Ascending aorta (tissue), 2 donors: ENCODE measurements at regions of chr17 and their contacts with region 1.

Region 1: DNA sequence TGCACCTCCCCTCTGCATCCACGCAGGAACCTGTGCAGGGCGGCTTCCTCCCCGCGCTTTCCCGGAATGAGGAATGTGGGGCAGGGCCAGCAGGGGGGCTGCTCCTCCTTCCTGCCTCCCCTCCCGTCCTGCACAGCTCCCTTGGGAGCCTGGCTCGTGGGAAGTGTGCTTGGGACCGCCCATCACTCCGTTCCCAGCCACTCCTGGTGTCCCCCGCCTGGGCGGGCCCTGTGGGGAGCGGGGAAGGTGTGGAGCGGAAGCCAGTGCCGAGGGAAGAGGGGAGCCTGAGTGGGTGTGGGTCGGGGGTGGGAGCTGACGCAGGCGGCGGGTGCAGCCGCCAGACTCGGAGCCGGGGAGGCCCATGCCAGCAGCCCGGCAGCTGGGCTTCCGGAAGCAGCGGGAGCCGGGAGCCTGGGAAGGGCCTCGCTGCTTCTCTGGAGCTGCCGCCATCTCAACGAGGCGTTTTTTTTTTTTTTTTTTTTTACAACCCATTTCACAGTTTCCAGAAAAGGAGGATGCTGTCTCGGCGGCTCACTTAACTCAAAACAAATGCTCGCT is 24.1 kb downstream of the BAHCC1 start:
- DNase-seq: peak; percentile 73 to 98
- H3K4me3 ChIP-seq: peak overlapping the region; percentile 46 to 56
- H3K27ac ChIP-seq: peak overlapping the region; percentile 91 to 100
- H3K4me1 ChIP-seq: peaks cover 61 to 68% of the 10 kb centered on the region in 2 donors
- H3K27me3 ChIP-seq: no peaks in the 10 kb centered on the region
- CTCF ChIP-seq: no peak

Region 2: GRCh38 chr17:81401723-81402529 is 17.5 kb before region 1 on chr17:
- intact Hi-C with region 1: loop called (anchors 1 kb)
- DNase-seq: no peak
- H3K4me3 ChIP-seq: peak overlapping the region in 1 of 2 donors; percentile 91
- H3K27ac ChIP-seq: peak overlapping the region; percentile 91 to 98
- H3K4me1 ChIP-seq: peaks cover 28 to 54% of the 10 kb centered on the region in 2 donors
- H3K27me3 ChIP-seq: no peaks in the 10 kb centered on the region
- CTCF ChIP-seq: peak in 2 of 3 experiments; percentile 19 to 37

Region 3: GRCh38 chr17:81601525-81602120 is 182.2 kb after region 1 on chr17:
- intact Hi-C with region 1: no loop called
- DNase-seq: peak in 1 of 2 donors; percentile 66
- H3K4me3 ChIP-seq: no peak overlapping the region
- H3K27ac ChIP-seq: peak overlapping the region in 1 of 2 donors; percentile 24
- H3K4me1 ChIP-seq: peaks cover 4 to 7% of the 10 kb centered on the region in 2 donors
- H3K27me3 ChIP-seq: no peaks in the 10 kb centered on the region
- CTCF ChIP-seq: peak; percentile 74 to 83 (median 77)